ENCODE measurements at regions of chr22 and their contacts with region 1.

Region 1: DNA sequence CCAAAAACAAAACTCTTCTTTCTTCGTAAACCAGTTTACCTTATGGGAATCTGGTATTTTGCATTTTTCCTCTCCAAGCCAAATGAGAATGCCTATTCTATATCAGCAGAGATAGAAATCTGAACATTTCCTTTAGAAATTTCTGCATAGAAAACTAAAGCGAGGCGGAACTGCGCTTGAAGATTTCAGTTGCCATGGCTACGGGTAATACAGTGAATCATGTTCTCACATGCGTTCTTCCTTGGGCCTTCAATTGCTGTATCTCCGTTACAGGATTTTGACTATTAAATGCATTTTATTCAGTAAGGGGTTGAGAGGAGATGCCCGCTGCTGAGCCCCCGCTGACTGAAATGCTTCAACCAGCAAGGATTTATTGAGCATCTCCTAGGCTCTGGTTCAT is 108.2 kb upstream of the CRYBB3 start:
- DNase-seq: no peak
- ATAC-seq: no peak

Region 2: GRCh38 chr22:24812950-24813775 is 278.3 kb before region 1 on chr22:
- intact Hi-C with region 1: loop called (anchors 2 kb)
- DNase-seq: no peak
- ATAC-seq: no peak